Cardiac septum (tissue), 1 donor: ENCODE measurements at regions of chr19 and their contacts with region 1.

Region 1: GRCh38 chr19:35135389-35135909 is 590 bp upstream of the LGI4 start:
- DNase-seq: peak; percentile 90

Region 2: DNA sequence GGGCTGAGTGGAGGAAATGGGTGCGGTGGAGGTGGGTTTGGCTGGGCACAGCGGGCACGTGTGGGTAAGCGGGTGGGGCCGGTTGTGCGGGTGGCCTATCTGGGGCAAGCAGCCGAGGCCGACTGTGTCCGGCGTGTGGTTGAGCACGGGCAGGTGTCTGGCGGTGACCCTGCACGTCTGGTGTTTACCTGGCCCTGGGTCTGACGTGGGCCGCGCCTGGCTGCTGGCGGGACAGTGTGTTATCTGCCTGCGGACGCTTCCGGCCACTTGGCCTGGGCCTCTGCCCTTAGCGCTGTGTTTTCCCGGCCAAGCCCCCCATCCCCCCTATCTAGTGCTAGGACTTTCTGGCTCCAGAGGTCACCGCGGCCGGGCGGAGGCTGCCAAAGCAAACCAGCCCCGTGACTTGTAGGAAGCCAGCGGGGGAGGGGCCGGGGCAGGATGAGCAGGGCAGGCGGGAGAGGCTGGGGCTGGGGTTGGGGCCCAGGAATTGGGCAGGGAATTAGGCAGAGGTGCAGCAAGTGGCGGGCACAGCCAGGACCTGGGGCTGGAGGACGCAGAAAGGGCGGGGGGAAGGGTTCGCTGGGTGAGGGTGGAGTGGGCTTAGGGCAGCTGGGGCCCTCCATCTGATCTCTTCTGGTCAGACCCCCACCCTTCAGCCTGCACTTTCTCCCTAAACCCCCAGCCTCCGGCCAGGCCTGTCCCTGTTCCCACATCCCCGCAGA is 94.5 kb before region 1 on chr19:
- intact Hi-C with region 1: loop called (anchors 2 kb)
- DNase-seq: peak; percentile 93

Region 3: GRCh38 chr19:35066691-35067563 is 68.5 kb before region 1 on chr19:
- intact Hi-C with region 1: loop called (anchors 2 kb)
- DNase-seq: peak; percentile 87

Region 4: DNA sequence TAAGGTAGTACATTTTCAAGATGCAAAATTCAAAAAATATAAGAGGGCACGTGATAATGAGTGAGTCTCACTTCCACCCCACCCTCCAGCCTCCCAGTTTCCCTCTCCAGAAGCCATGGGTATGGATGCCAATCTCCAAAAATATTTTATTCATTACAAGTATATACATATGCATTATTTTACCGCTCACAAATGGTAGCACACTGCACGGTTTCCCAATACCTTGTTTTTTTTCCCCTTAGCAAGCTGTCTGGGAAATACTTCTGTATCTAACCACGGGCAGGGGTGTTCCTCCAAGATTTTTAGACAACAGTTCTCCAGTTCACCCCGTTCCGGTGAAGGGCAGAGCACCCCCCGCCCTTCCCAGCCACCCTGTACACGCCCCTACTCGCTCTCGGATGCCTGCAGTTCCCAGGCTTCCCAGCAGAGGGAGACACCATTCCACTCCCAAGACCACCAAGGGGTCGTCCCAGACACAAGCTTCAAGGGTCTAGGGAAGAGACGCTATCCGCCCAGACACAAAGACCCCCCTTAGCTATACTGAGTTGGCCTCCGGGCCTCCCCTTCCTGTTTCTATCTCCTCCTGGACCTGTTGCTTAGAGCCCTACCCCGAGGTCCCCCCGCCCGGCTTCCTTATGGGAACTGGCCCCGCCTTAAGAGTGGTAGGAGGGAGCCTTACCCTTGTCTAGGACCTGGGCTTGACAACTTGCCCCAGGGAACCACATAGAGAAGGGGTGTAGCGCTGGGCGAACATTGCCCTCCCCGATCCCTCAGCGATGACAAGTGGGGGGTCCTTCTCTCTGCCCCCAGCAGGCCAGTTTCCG is 20.9 kb before region 1 on chr19:
- intact Hi-C with region 1: loop called (anchors 1 kb)
- DNase-seq: peak; percentile 80

Region 5: GRCh38 chr19:35168207-35168606 is 32.8 kb after region 1 on chr19:
- intact Hi-C with region 1: no loop called
- DNase-seq: peak; percentile 41